Right ventricle myocardium inferior (tissue), 1 donor: ENCODE measurements at regions of chr2 and their contacts with region 1.

Region 1: GRCh38 chr2:224778474-224778877 is 62.3 kb upstream of the CCDC195 start:
- DNase-seq: no peak
- ATAC-seq: no peak

Region 2: DNA sequence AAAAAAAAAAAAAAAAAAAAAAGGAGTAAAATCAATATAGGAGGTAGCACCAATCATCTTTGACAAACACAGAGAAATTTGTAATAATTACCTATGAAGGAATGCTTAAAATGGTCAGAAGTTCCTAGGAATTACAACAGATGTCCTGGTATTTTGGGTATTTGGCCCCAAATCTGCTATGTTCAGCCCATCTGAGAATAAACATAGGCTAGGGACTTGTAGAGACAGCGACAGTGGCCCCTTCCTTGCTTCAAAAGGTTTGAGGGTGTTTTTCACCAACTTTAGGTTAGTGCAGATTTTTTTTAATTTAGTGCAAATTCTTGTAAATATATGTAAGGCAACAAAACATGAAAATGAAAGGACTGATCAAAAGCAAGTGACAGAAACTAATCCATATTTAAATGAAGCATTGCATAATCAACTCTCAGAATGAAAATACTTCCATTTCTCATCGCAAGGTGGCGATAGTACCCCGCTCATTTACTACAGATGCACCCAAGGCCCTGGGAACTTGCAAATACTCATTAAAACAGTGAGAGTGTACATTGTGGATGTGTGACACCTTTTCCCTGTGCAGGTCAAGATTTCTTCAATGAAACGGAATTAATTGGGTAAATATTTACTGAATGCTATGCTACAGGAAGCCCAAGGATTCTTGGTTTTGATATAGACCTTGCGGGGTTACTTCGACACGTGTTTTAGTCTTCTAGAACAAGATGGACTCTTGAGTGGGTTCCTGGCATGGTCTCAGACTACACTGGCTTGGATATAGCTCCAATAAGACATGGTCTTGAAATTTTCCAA is 421.2 kb before region 1 on chr2:
- intact Hi-C with region 1: loop called (anchors 5 kb)
- DNase-seq: no peak
- ATAC-seq: no peak

Region 3: GRCh38 chr2:224532931-224533330 is 245.5 kb before region 1 on chr2:
- intact Hi-C with region 1: no loop called
- DNase-seq: no peak
- ATAC-seq: no peak